Heart right ventricle (tissue), 16 donors: ENCODE measurements at regions of chr7 and their contacts with region 1.

Region 1: GRCh38 chr7:102412548-102412947 is 16.4 kb downstream of the PRKRIP1 start:
- DNase-seq: peak; percentile 38 to 54
- ATAC-seq: peak; percentile 68 to 91 (median 80)
- H3K4me3 ChIP-seq: no peak overlapping the region
- H3K27ac ChIP-seq: peak overlapping the region in 1 of 10 donors; percentile 21
- H3K4me1 ChIP-seq: peaks cover 0 to 26% (median 8%) of the 10 kb centered on the region in 9 donors
- H3K27me3 ChIP-seq: no peaks in the 10 kb centered on the region
- CTCF ChIP-seq: peak; percentile 16 to 60 (median 53)

Region 2: GRCh38 chr7:102396027-102397019 is 16.2 kb before region 1 on chr7 and contains the start of gene PRKRIP1:
- intact Hi-C with region 1: no loop called
- DNase-seq: peak; percentile 73 to 88
- ATAC-seq: peak; percentile 90 to 96 (median 94)
- H3K4me3 ChIP-seq: peak within 1 kb of the TSS; percentile 76 to 99 (median 96)
- H3K27ac ChIP-seq: peak within 1 kb of the TSS; percentile 43 to 94 (median 87)
- H3K4me1 ChIP-seq: peaks cover 0 to 17% (median 14%) of the 10 kb centered on the region in 9 donors
- H3K27me3 ChIP-seq: no peaks in the 10 kb centered on the region
- CTCF ChIP-seq: no peak
- total RNA-seq, gene PRKRIP1: 7.1 to 14.7 (median 11.3) TPM

Region 3: GRCh38 chr7:102444961-102445673 is 32.6 kb after region 1 on chr7:
- intact Hi-C with region 1: loop called in 1 of 10 experiments (anchors 5 kb)
- DNase-seq: no peak
- ATAC-seq: no peak
- H3K4me3 ChIP-seq: no peak overlapping the region
- H3K27ac ChIP-seq: no peak overlapping the region
- H3K4me1 ChIP-seq: peaks cover 0 to 9% (median 5%) of the 10 kb centered on the region in 9 donors
- H3K27me3 ChIP-seq: no peaks in the 10 kb centered on the region
- CTCF ChIP-seq: no peak

Region 4: DNA sequence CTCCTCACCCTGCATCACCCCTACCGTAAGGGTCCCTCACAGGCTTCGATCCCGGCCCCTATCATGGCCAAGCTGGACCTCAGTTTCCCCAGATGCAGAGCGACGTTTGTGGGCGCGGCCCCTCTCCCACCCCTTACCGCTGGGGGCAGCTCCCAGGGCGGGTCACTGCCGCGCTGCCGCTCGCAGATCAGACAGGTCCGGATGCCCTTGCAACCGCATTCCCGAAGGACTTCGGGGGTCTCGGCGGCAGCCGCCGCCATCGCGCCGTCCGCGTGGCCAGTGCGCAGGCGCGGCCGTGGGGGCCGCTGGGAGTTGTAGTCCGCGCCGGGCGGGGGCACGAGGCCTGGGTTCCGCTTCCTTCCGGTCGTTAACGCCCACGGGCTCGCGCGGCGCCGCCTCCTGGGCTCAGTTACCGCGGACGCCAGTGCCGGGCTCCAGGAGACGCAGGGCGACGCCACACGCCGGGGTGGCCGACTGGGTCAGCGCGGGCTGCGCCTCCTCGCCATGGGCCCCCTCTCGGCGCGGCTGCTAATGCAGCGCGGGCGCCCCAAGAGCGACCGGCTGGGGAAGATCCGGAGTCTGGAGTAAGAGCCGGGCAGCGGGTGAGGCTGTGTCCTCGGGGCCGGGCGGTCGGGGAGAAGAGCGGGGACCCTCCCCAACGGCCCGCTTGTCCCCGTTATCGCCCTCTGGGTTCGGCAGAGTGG is 52.2 kb after region 1 on chr7 and contains the starts of genes ALKBH4 and LRWD1:
- intact Hi-C with region 1: loop called in 2 of 10 experiments (anchors 5 to 10 kb)
- DNase-seq: peak; percentile 94 to 96
- ATAC-seq: peak; percentile 93 to 98 (median 96)
- H3K4me3 ChIP-seq: peak within 1 kb of the TSS; percentile 74 to 100 (median 91)
- H3K27ac ChIP-seq: peak within 1 kb of the TSS in 9 of 10 donors; percentile 53 to 94 (median 82)
- H3K4me1 ChIP-seq: peaks cover 4 to 26% (median 23%) of the 10 kb centered on the region in 9 donors
- H3K27me3 ChIP-seq: no peaks in the 10 kb centered on the region
- CTCF ChIP-seq: peak in 7 of 9 donors; percentile 17 to 51 (median 36)
- total RNA-seq, gene ALKBH4: 4.4 to 8.6 (median 6.2) TPM
- total RNA-seq, gene LRWD1: 8.1 to 12.2 (median 9.5) TPM